ENCODE measurements at regions of chr10 and their contacts with region 1.

Region 1: DNA sequence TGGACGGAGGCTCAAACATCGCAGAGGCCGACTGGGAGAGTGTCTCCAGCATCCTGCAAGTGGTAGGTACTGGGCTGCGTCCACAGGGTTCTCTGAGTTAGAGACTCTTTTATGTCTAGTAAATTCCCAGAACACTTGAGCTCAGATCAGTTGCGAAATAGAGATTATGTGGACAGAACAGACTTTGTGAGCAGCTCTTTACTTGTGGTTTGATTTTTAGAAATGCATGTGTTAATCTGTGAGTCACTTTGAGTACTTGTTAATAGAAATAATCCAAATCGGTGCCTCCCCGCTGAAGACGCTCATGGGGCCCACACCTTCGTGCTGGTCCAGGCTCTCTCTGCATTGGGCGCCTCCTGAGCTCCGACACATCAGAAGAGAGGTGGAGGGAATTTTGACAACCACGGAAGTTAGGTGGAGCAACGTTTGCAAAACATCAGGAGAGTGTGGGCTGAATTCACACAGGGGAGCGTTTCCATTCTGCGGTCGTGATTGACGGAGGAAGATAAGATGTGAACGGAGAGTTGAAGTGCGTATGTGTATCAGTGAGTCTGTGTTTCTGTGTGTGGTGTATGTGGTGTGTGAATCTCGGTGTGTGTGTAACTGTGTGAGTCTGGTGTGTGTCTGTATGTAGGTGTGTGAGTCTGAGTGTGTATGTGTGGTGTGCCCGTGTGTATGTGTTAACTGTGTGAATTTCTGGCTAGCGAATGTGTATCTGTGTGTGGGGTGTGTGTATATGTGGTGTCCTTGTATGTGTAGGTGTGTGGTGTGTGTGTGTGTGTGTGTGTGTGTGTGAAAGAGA is 32.1 kb downstream of the PFKP start:
- DNase-seq: no peak
- H3K4me3 ChIP-seq: no peak overlapping the region
- H3K27ac ChIP-seq: peak overlapping the region in 2 of 4 donors; percentile 11 to 71
- H3K4me1 ChIP-seq: peaks cover 35 to 76% (median 71%) of the 10 kb centered on the region in 4 donors
- H3K27me3 ChIP-seq: no peaks in the 10 kb centered on the region
- CTCF ChIP-seq: no peak
- EP300 ChIP-seq: no peak
- POLR2A ChIP-seq: no peak

Region 2: GRCh38 chr10:3054183-3054850 is 45.2 kb before region 1 on chr10:
- intact Hi-C with region 1: no loop called
- DNase-seq: no peak
- H3K4me3 ChIP-seq: no peak overlapping the region
- H3K27ac ChIP-seq: peak overlapping the region; percentile 36 to 77 (median 62)
- H3K4me1 ChIP-seq: peaks cover 3 to 15% (median 14%) of the 10 kb centered on the region in 4 donors
- H3K27me3 ChIP-seq: no peaks in the 10 kb centered on the region
- CTCF ChIP-seq: no peak
- EP300 ChIP-seq: no peak
- POLR2A ChIP-seq: no peak

Region 3: DNA sequence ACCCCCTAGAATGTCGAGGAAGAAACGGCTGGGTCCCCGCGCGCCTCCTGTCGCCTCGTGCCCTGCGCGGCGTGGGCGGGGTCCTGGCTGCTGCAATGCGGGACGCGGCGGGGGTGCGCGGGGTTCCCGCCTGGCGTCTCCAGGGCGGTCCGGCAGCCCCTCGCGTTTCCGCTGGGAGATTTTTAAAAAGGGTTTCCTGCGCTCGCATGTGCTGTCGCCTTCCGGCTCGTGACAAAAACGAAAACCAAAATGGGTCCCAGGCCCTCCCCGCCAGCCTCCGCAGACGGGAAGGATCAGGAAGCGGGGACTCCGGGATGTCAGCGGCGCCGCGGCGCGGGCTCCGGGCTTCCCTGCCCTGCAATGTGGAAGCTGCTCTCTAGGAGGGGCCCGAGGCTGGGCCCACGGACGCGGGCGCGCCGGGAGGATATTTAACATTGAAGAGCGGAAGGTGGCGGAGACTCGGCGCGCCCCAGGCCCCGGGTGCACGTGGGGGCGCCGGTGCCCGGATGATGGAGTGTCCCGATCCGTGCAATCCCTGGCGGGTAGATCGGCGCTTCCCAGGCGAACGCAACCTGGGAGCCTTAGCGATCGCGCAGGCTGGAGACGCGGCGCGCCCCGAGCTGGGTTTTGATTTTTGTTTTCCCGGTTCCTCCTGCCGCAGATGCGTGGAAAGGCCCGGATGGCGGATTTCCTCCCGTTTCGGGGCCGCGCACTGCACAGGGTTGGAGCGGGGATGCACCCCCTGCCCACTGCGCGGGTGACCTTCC is 31.1 kb before region 1 on chr10:
- intact Hi-C with region 1: loop called (anchors 5 kb)
- DNase-seq: no peak
- H3K4me3 ChIP-seq: peak overlapping the region; percentile 78 to 91 (median 84)
- H3K27ac ChIP-seq: peak overlapping the region; percentile 82 to 89 (median 84)
- H3K4me1 ChIP-seq: peaks cover 22 to 58% (median 45%) of the 10 kb centered on the region in 4 donors
- H3K27me3 ChIP-seq: no peaks in the 10 kb centered on the region
- CTCF ChIP-seq: peak; percentile 28 to 54 (median 34)
- EP300 ChIP-seq: no peak
- POLR2A ChIP-seq: no peak

Measured in esophagus muscularis mucosa (tissue), 4 donors.